ENCODE measurements at regions of chr2 and their contacts with region 1.

Region 1: DNA sequence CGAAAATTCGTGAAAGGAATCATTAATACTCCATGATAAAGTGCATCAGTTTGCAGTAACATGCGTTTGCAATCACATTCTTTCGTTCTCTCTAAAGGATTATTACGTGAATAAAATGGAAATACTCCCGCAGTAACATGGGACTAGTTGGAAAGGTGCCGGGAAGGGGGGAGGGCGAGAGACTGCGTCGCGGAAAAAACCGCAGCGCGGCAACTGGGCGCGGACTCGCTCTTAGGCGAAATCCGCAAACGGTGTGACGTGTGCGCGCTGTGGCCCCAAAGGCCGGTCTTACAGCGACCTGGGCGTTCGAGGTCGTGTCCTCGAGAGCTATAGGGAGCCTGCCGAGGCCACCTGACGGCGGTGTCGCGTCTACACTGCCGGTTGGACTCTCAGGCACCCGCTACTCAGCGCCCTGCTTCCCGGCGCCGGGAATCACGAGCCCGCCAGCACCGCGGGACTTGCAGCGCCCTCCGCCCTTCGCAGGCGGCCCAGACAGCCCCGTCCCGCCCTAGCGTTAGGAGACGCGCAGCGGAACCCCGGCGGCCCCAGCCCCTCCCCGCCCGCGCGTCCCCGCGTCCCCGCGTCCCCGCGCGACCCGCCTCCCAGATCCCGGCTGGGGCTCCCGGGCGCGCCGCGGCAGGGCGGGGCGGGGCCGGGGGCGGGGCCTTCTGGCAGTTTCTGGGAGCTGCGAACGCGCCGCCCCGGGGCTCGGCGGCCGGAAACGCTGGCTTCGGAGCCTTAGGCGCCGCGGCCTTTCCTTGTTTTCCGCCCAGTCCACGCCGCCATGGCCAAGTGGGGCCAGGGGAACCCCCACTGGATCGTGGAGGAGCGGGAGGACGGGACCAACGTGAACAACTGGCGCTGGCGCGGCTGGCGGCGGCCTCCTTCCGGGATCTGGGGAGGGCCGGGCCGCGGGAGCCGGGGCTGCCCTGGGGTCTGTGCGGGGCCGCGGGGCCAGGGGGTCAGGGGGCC is 15.1 kb downstream of the C2orf74 start:
- DNase-seq: peak; percentile 95
- H3K4me3 Mint-ChIP-seq: peak overlapping the region; percentile 89
- H3K27ac Mint-ChIP-seq: peak overlapping the region; percentile 88
- H3K4me1 Mint-ChIP-seq: peaks cover 54% of the 10 kb centered on the region
- H3K27me3 Mint-ChIP-seq: peaks cover 4% of the 10 kb centered on the region

Region 2: GRCh38 chr2:60881047-60881932 is 295.8 kb before region 1 on chr2 and contains the start of gene REL:
- CTCF ChIA-PET with region 1: no interaction called
- POLR2A ChIA-PET with region 1: interaction called, 19 read pairs
- DNase-seq: peak; percentile 90
- H3K4me3 Mint-ChIP-seq: peak within 1 kb of the TSS; percentile 95
- H3K27ac Mint-ChIP-seq: peak within 1 kb of the TSS; percentile 96
- H3K4me1 Mint-ChIP-seq: peaks cover 27% of the 10 kb centered on the region
- H3K27me3 Mint-ChIP-seq: peaks cover 3% of the 10 kb centered on the region
- total RNA-seq, gene REL: 22.9 to 24.0 TPM

Region 3: DNA sequence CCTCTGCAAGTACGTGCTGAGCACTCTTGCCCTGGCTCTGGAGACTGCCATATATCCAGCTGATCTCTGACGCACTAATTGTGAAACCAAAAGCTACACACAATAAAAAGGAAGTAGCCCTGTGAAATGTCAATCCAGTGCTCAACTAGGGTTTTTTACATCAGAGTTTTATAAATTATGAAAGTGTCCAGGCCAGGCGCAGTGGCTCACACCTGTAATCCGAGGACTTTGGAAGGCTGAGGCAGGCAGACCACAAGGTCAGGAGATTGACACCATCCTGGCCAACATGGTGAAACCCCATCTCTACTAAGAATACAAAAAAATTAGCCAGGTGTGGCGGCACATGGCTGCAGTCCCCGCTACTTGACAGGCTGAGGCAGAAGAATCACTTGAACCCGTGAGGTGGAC is 184.1 kb before region 1 on chr2:
- CTCF ChIA-PET with region 1: no interaction called
- POLR2A ChIA-PET with region 1: no interaction called
- DNase-seq: peak; percentile 26
- H3K4me3 Mint-ChIP-seq: peak overlapping the region; percentile 33
- H3K27ac Mint-ChIP-seq: peak overlapping the region; percentile 76
- H3K4me1 Mint-ChIP-seq: peaks cover 10% of the 10 kb centered on the region
- H3K27me3 Mint-ChIP-seq: no peaks in the 10 kb centered on the region

Region 4: DNA sequence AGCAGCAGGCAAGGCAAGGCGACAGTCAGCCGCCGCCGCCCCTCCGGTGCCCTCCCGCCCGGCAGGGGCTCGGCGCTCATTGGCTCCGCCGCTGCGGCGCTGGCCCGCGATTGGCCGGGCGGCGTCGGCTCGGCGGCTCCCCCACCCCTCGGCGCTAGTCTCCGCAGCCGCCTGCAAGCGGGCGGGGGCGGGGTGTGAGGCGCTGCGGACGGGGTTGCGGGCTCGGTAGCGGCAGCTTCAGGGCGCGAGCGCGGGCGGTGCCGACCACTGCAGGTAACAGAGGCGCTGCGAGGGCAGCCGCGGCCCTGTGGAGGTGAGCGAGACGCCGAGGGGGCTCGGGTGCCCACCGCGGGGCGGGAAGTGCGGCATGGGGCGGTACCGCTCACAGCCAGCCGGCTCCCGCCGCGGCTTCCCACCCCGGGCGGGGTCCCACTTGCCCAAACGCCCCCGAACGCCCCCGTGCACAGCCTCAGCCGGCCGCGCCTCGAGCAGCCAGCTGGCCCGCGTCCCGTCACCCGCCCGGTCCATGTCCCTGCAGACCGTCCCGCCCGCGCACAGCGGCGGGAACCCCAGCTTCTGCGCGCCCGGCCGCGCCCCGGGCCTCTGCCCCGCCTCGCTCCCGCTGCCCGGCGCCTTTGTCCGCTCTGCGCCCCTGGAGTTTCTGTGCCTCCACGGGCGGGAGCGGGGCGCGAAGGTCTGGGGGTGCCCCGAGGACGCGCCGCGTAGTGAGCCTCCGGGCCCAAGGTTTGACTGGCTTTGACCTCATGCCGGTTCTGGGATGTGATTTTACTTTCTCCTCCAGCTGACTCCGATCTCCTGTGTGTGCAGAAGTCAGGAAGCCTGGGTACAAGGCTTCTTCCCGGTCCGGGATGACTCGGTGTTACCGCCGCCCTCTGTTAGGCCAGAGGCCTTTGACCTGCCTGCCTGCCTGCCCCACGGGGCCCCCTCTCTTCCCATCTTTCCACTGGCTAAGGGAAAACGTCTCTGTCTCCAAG is 111.0 kb before region 1 on chr2 and contains the start of gene SANBR:
- CTCF ChIA-PET with region 1: no interaction called
- POLR2A ChIA-PET with region 1: interaction called, 26 read pairs
- DNase-seq: peak; percentile 88
- H3K4me3 Mint-ChIP-seq: peak within 1 kb of the TSS; percentile 93
- H3K27ac Mint-ChIP-seq: peak within 1 kb of the TSS; percentile 77
- H3K4me1 Mint-ChIP-seq: peaks cover 21% of the 10 kb centered on the region
- H3K27me3 Mint-ChIP-seq: no peaks in the 10 kb centered on the region
- total RNA-seq, gene SANBR: 9.9 to 10.8 TPM

Region 5: DNA sequence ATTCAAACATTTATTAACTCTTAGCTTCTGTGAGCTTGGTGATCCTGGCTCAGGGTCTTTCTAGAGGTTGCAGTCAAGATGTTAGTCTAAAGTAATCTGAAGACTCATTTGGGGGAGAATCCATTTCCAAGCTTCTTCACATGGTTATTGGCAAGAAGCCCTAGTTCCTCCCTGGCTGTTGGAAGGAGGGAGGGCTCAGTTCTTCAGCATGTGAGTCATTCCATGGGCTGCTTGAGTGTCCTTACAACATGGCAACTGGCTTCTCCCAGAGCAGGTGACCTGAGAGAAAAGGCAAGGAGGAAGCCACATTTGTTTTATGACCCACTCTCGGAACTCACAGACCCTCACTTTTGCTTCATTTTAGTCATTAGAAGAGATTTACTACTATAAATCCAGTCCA is 25.6 kb before region 1 on chr2:
- CTCF ChIA-PET with region 1: no interaction called
- POLR2A ChIA-PET with region 1: interaction called, 50 read pairs
- DNase-seq: no peak
- H3K4me3 Mint-ChIP-seq: no peak overlapping the region
- H3K27ac Mint-ChIP-seq: no peak overlapping the region
- H3K4me1 Mint-ChIP-seq: peaks cover 3% of the 10 kb centered on the region
- H3K27me3 Mint-ChIP-seq: no peaks in the 10 kb centered on the region

Region 6: GRCh38 chr2:61210331-61210981 is 33.4 kb after region 1 on chr2:
- CTCF ChIA-PET with region 1: no interaction called
- POLR2A ChIA-PET with region 1: interaction called, 11 read pairs
- DNase-seq: no peak
- H3K4me3 Mint-ChIP-seq: no peak overlapping the region
- H3K27ac Mint-ChIP-seq: no peak overlapping the region
- H3K4me1 Mint-ChIP-seq: no peaks in the 10 kb centered on the region
- H3K27me3 Mint-ChIP-seq: no peaks in the 10 kb centered on the region

Region 7: DNA sequence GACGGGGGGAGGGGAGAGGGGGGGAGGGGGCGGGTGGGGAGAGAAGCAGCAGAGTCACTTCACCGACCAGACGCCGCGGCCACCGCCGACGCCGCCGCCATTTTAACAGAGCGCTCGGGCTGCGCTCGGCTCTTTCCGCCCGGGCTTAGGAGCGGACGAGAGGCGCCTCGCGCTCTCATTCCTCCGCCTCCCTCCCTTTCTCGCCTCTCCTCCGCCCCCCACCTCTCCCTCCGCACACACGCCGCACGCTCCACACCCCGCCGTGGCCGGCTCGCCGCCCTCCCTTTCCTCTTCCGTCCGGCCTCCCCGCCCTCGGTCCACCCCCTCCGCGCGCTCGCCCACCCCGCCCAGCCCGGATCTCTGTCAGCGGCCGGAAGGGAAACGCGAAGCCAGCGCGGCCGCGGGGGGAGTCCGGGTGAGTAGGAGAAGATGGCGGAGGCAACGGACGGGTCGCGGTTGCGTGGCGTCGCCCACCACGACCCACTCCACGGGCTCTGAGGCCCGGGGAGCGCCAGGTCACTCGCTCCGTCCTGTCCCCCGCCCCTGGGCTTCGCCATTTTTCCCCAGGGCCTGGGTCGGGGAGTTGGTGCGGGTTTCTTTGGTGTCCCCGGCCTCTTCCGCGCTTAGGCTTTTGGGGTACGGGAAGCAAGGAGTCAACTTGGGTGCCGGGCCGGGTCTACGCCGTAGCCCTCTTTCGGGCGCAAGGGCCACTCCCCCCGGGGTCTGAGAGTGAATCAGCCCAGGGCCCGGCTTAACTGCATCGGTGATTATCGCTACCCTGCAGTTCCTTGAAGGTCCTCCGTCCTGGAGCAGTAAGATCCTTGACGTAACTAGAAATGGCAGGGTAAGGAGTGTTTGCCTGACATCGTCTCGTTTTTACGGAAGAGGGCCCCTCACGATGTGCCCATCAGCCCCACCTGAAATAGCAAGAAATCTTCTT is 294.2 kb after region 1 on chr2 and contains the start of gene USP34:
- CTCF ChIA-PET with region 1: no interaction called
- POLR2A ChIA-PET with region 1: interaction called, 10 read pairs
- DNase-seq: peak; percentile 94
- H3K4me3 Mint-ChIP-seq: peak within 1 kb of the TSS; percentile 91
- H3K27ac Mint-ChIP-seq: peak within 1 kb of the TSS; percentile 95
- H3K4me1 Mint-ChIP-seq: peaks cover 30% of the 10 kb centered on the region
- H3K27me3 Mint-ChIP-seq: no peaks in the 10 kb centered on the region
- total RNA-seq, gene USP34: 77.5 to 79.4 TPM

Measured in activated CD4-positive, alpha-beta memory T cell treated with anti-CD3 and anti-CD28 coated beads, Interleukin-2, amount 10 ng/mL, durations not matched to agents 7 days and 5 days (primary cell).